Endothelial cell of umbilical vein (primary cell): ENCODE measurements at regions of chr13 and their contacts with region 1.

Region 1: DNA sequence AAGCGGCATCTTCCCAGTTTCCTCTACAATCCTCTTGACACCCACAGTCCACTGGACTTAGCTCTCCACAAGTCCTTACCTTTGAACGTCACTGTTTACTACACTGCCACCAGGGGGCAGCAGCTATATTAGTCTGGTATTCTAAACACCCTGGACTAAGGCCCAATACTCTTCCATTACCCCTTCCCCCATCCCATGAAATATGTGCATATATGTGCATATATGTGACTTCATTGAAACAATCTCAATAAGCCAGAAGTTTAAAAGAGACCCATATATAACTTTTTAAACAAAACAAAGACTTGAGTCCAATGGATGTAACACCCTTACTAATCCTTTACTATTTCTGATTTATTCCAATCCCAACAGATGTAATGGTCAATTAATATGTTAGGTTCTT is 15.5 kb downstream of the GGACT start:
- DNase-seq: peak; percentile 83
- H3K4me3 ChIP-seq: no peak overlapping the region
- H3K27ac ChIP-seq: no peak overlapping the region
- H3K4me1 ChIP-seq: no peaks in the 10 kb centered on the region
- H3K27me3 ChIP-seq: no peaks in the 10 kb centered on the region
- CTCF ChIP-seq: peak; percentile 72 to 75
- POLR2A ChIP-seq: no peak

Region 2: GRCh38 chr13:99830931-99831330 is 742.2 kb before region 1 on chr13:
- CTCF ChIA-PET with region 1: no interaction called
- POLR2A ChIA-PET with region 1: no interaction called
- dilution Hi-C with region 1: no loop called
- intact Hi-C with region 1: no loop called
- DNase-seq: no peak
- H3K4me3 ChIP-seq: no peak overlapping the region
- H3K27ac ChIP-seq: no peak overlapping the region
- H3K4me1 ChIP-seq: no peaks in the 10 kb centered on the region
- H3K27me3 ChIP-seq: no peaks in the 10 kb centered on the region
- CTCF ChIP-seq: no peak
- POLR2A ChIP-seq: no peak

Region 3: DNA sequence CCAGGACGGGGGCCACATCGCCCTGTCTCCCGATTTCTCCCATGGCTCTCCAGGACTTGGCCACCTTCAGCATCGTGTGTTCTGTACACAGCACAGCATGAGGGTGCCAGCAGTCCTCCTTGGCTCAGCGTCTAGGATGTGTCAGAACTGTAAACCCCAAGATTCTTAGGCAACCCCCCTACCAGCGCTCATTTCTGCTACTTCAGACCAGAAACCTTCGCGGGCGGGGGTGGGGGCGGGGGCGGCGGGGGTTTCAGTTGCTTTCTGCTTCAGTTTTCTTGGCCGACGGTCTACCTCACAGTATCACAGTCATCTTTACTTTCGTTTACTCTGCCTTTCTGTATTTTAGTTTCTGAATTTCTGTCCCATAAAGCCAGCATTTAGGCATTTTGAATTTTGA is 67.0 kb before region 1 on chr13:
- CTCF ChIA-PET with region 1: no interaction called
- POLR2A ChIA-PET with region 1: no interaction called
- dilution Hi-C with region 1: no loop called
- intact Hi-C with region 1: no loop called
- DNase-seq: no peak
- H3K4me3 ChIP-seq: no peak overlapping the region
- H3K27ac ChIP-seq: no peak overlapping the region
- H3K4me1 ChIP-seq: peaks cover 9% of the 10 kb centered on the region
- H3K27me3 ChIP-seq: no peaks in the 10 kb centered on the region
- CTCF ChIP-seq: no peak
- POLR2A ChIP-seq: no peak

Region 4: GRCh38 chr13:100560498-100561157 is 12.5 kb before region 1 on chr13:
- CTCF ChIA-PET with region 1: interaction called, 25 read pairs
- POLR2A ChIA-PET with region 1: no interaction called
- dilution Hi-C with region 1: no loop called
- intact Hi-C with region 1: no loop called
- DNase-seq: no peak
- H3K4me3 ChIP-seq: no peak overlapping the region
- H3K27ac ChIP-seq: no peak overlapping the region
- H3K4me1 ChIP-seq: no peaks in the 10 kb centered on the region
- H3K27me3 ChIP-seq: no peaks in the 10 kb centered on the region
- CTCF ChIP-seq: no peak
- POLR2A ChIP-seq: no peak

Region 5: GRCh38 chr13:100625456-100625855 is 52.3 kb after region 1 on chr13:
- CTCF ChIA-PET with region 1: interaction called, 21 read pairs
- POLR2A ChIA-PET with region 1: no interaction called
- dilution Hi-C with region 1: no loop called
- intact Hi-C with region 1: loop called (anchors 1 kb)
- DNase-seq: peak; percentile 12
- H3K4me3 ChIP-seq: no peak overlapping the region
- H3K27ac ChIP-seq: no peak overlapping the region
- H3K4me1 ChIP-seq: peaks cover 5% of the 10 kb centered on the region
- H3K27me3 ChIP-seq: no peaks in the 10 kb centered on the region
- CTCF ChIP-seq: no peak
- POLR2A ChIP-seq: no peak

Region 6: GRCh38 chr13:100674848-100675660 is 101.9 kb after region 1 on chr13:
- CTCF ChIA-PET with region 1: interaction called, 13 read pairs
- POLR2A ChIA-PET with region 1: no interaction called
- dilution Hi-C with region 1: no loop called
- intact Hi-C with region 1: loop called (anchors 5 kb)
- DNase-seq: peak; percentile 99
- H3K4me3 ChIP-seq: peak overlapping the region; percentile 60 to 82 (median 81)
- H3K27ac ChIP-seq: peak overlapping the region; percentile 60
- H3K4me1 ChIP-seq: peaks cover 14% of the 10 kb centered on the region
- H3K27me3 ChIP-seq: peaks cover 0 to 3% of the 10 kb centered on the region in 2 experiments
- CTCF ChIP-seq: peak in 1 of 2 donors; percentile 45
- POLR2A ChIP-seq: no peak

Region 7: DNA sequence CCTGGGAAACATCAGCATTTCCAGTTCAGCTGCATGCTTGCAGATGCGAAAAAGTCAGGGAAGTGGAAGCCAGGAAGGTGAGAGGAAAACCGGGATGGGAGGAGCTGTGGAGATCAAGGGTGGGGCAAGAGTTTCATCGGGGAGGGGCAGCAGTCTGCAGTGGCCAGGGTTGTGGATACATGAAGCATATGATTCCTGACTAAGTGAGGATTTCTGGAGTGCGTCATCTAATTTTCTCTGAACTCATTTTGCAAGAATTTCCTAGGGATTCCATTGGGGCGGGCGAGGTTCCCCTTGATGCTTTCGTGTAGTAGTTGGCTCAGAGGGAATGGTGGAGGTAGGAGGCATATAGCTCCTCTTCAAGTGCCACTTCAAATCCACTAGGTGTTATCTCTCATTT is 445.6 kb after region 1 on chr13:
- CTCF ChIA-PET with region 1: no interaction called
- POLR2A ChIA-PET with region 1: no interaction called
- dilution Hi-C with region 1: no loop called
- intact Hi-C with region 1: no loop called
- DNase-seq: no peak
- H3K4me3 ChIP-seq: no peak overlapping the region
- H3K27ac ChIP-seq: no peak overlapping the region
- H3K4me1 ChIP-seq: no peaks in the 10 kb centered on the region
- H3K27me3 ChIP-seq: no peaks in the 10 kb centered on the region
- CTCF ChIP-seq: no peak
- POLR2A ChIP-seq: no peak

Region 8: DNA sequence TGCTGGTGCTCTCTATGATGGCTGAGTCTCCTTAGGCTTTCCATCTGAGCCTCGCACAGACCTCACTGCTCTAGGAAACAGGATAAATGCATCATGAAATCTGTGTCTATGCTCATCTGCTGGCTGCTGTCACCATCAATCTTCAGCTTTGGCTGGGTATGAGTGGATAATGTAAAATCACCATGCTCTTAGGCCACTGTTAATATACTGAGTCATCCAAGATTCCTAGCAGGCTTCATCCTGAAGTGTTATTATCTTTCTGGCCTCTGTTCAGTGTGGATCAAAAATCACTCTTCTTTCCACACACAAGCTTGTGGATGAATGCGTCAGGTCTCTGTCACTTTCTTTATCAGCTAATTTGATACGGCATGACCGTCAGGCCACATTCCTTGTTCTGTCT is 525.8 kb after region 1 on chr13:
- CTCF ChIA-PET with region 1: interaction called, 31 read pairs
- POLR2A ChIA-PET with region 1: no interaction called
- dilution Hi-C with region 1: no loop called
- intact Hi-C with region 1: loop called (anchors 1 kb)
- DNase-seq: no peak
- H3K4me3 ChIP-seq: no peak overlapping the region
- H3K27ac ChIP-seq: no peak overlapping the region
- H3K4me1 ChIP-seq: no peaks in the 10 kb centered on the region
- H3K27me3 ChIP-seq: no peaks in the 10 kb centered on the region
- CTCF ChIP-seq: no peak
- POLR2A ChIP-seq: no peak